Ovary (tissue), 10 donors: ENCODE measurements at regions of chr2 and their contacts with region 1.

Region 1: GRCh38 chr2:128559533-128560515 is 241.2 kb upstream of the HS6ST1 start:
- DNase-seq: no peak
- H3K4me3 ChIP-seq: no peak overlapping the region
- H3K27ac ChIP-seq: no peak overlapping the region
- H3K4me1 ChIP-seq: no peaks in the 10 kb centered on the region
- H3K27me3 ChIP-seq: no peaks in the 10 kb centered on the region
- CTCF ChIP-seq: no peak
- EP300 ChIP-seq: no peak
- POLR2A ChIP-seq: no peak

Region 2: GRCh38 chr2:128503804-128504652 is 55.8 kb before region 1 on chr2:
- intact Hi-C with region 1: loop called in 1 of 4 experiments (anchors 1 kb)
- DNase-seq: peak in 1 of 5 donors; percentile 5
- H3K4me3 ChIP-seq: no peak overlapping the region
- H3K27ac ChIP-seq: no peak overlapping the region
- H3K4me1 ChIP-seq: peaks cover 28% of the 10 kb centered on the region
- H3K27me3 ChIP-seq: no peaks in the 10 kb centered on the region
- CTCF ChIP-seq: no peak
- EP300 ChIP-seq: no peak
- POLR2A ChIP-seq: no peak